Activated CD4-positive, alpha-beta T cell treated with anti-CD3 and anti-CD28 coated beads, Interleukin-2, amount 10 ng/mL, durations not matched to agents 24 days and 14 days (primary cell): ENCODE measurements at regions of chr2 and their contacts with region 1.

Region 1: DNA sequence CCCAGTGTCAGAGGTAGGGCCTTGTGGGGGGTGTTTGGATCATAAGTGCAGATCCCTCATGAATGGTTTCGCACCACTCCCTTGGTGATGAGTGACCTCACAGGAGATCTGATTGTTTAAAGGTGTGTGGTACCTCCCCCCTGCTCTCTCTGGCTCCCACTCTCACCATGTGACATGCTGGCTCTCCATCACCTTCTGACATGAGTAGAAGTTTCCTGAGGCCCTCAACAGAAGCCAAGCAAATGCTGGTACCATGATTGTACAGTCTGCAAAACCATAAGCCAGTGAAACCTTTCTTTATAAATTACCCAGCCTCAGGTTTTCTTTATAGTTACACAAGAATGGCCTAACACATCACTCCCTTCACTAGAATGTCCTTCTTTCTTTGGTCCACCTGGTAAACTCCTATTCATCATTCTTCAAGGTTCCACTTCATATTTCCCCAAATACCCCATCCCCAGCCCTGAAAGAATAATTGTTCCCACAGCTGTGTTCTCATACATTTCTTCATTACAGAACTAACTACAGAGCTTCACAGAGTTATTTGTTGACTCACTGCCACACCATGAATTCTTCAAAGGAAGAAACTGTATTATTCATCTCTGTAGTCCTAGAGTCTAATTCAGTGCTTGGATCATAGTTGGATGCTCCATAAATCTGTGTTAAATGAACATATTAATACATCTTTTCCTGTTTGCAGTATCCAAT is 81.2 kb upstream of the STK17B start:
- DNase-seq: no peak
- H3K4me3 Mint-ChIP-seq: peak overlapping the region; percentile 2
- H3K27ac Mint-ChIP-seq: peak overlapping the region; percentile 79
- H3K4me1 Mint-ChIP-seq: peaks cover 72% of the 10 kb centered on the region
- H3K27me3 Mint-ChIP-seq: no peaks in the 10 kb centered on the region

Region 2: GRCh38 chr2:195674491-195675221 is 577.9 kb before region 1 on chr2:
- intact Hi-C with region 1: no loop called
- DNase-seq: no peak
- H3K4me3 Mint-ChIP-seq: no peak overlapping the region
- H3K27ac Mint-ChIP-seq: no peak overlapping the region
- H3K4me1 Mint-ChIP-seq: peaks cover 5% of the 10 kb centered on the region
- H3K27me3 Mint-ChIP-seq: no peaks in the 10 kb centered on the region

Region 3: GRCh38 chr2:196143730-196144131 is 108.8 kb before region 1 on chr2:
- intact Hi-C with region 1: no loop called
- DNase-seq: no peak
- H3K4me3 Mint-ChIP-seq: peak overlapping the region; percentile 31
- H3K27ac Mint-ChIP-seq: peak overlapping the region; percentile 88
- H3K4me1 Mint-ChIP-seq: peaks cover 45% of the 10 kb centered on the region
- H3K27me3 Mint-ChIP-seq: no peaks in the 10 kb centered on the region

Region 4: DNA sequence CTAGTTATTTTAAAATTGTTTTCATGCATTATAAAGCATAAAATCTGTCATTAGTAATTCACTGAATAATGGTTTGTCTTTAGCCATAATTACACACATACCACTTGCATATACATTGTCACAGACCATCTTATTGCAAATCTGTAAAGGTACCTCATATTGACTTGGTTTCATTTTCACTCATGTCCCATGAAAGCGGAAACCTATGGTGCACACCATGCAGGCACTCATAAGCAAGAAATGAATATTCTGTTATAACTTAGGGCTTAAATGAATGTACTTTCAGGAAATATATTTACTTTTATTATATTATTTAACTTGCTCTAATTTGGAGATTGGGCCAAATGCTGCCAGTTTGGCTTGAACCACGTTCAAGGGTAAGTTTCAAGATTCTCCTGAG is 52.0 kb before region 1 on chr2:
- intact Hi-C with region 1: no loop called
- DNase-seq: peak; percentile 85
- H3K4me3 Mint-ChIP-seq: peak overlapping the region; percentile 55
- H3K27ac Mint-ChIP-seq: peak overlapping the region; percentile 90
- H3K4me1 Mint-ChIP-seq: peaks cover 35% of the 10 kb centered on the region
- H3K27me3 Mint-ChIP-seq: no peaks in the 10 kb centered on the region

Region 5: GRCh38 chr2:196263181-196263747 is 10.7 kb after region 1 on chr2:
- intact Hi-C with region 1: loop called (anchors 1 kb)
- DNase-seq: peak; percentile 89
- H3K4me3 Mint-ChIP-seq: peak overlapping the region; percentile 72
- H3K27ac Mint-ChIP-seq: peak overlapping the region; percentile 93
- H3K4me1 Mint-ChIP-seq: peaks cover 58% of the 10 kb centered on the region
- H3K27me3 Mint-ChIP-seq: no peaks in the 10 kb centered on the region

Region 6: DNA sequence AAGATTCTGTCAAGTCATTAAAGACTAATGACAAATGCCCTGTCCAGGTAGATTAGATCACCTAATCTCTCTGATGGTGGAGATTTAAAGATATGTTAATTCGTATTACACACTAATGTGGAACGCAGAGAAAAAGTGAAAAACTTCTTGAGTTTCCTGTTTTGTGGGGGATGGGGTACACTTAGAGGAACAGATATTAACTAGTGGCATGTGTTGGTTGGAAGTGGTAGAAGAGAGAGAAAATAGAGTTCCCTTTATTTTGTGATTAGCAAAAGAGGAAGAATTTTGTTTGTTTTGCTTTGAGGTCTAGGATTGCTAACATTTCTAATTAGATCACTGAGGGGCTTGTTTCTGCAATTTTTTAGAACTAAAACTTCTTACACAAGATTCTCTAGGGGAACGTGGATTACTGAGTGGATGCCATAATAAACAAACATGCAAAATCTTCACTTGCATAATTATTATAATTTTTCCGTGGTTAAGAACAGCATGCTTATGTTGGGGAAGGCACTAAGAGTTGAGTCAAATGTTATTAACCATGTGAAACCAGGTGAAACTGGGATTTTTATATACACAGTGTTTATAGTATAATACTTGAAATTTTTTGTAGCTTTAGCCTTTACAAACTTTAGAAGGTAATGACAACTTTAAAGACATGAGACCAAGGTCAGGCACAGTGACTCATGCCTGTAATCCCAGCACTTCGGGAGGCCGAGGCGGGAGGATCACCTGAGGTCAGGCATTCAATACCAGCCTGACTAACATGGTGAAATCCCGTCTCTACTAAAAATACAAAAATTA is 16.2 kb after region 1 on chr2:
- intact Hi-C with region 1: loop called (anchors 2 kb)
- DNase-seq: no peak
- H3K4me3 Mint-ChIP-seq: peak overlapping the region; percentile 65
- H3K27ac Mint-ChIP-seq: peak overlapping the region; percentile 65
- H3K4me1 Mint-ChIP-seq: peaks cover 36% of the 10 kb centered on the region
- H3K27me3 Mint-ChIP-seq: no peaks in the 10 kb centered on the region